ENCODE measurements at regions of chr6 and their contacts with region 1.

Region 1: DNA sequence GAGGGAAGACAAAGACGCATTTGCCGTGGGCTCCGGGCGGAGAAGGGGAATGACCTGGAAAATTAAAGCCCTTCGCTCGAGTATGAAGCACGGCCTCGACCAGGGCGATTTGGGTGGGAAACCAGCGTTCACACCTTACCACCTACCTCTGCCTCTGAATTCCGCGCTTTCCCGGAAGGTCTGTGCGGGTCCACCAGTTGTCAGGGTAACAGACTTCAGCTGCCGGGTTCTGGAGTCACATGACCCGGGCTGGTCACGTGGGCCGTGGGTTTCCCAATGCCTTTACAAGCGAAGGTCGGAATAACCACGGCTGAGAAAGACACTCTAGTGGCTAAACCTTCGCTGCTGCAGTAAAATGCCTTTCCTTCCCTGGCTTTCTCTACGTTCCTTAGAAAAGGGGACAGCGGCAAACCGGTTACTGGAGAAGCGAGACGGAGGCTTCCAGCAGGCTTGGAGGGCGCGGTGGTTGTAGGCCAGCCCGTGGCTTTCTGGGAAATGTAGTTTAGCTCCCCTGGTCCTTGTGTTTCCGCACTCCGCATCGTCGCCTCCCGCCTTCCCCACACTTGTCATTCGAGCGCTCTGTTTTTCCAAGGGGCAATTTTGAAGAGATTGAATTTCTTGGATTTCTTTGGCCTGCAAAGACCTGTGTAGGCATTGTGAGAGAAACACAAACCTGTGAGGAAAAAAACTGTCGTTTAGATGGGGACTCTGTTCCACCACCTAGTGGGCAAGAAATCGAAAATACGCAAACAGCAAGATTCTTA is at the start of gene CEP162:
- DNase-seq: peak; percentile 89 to 94 (median 91)
- H3K4me3 ChIP-seq: peak within 1 kb of the TSS; percentile 94 to 95
- H3K4me3 Mint-ChIP-seq: peak within 1 kb of the TSS; percentile 96 to 100 (median 98)
- H3K27ac ChIP-seq: peak within 1 kb of the TSS; percentile 69
- H3K27ac Mint-ChIP-seq: peak within 1 kb of the TSS; percentile 90 to 98 (median 96)
- H3K4me1 ChIP-seq: peaks cover 17% of the 10 kb centered on the region
- H3K4me1 Mint-ChIP-seq: peaks cover 8 to 32% (median 19%) of the 10 kb centered on the region in 4 donors
- H3K27me3 ChIP-seq: no peaks in the 10 kb centered on the region
- H3K27me3 Mint-ChIP-seq: peaks cover 5 to 6% of the 10 kb centered on the region in 2 donors
- total RNA-seq, gene CEP162: 10.3 to 10.4 TPM

Region 2: DNA sequence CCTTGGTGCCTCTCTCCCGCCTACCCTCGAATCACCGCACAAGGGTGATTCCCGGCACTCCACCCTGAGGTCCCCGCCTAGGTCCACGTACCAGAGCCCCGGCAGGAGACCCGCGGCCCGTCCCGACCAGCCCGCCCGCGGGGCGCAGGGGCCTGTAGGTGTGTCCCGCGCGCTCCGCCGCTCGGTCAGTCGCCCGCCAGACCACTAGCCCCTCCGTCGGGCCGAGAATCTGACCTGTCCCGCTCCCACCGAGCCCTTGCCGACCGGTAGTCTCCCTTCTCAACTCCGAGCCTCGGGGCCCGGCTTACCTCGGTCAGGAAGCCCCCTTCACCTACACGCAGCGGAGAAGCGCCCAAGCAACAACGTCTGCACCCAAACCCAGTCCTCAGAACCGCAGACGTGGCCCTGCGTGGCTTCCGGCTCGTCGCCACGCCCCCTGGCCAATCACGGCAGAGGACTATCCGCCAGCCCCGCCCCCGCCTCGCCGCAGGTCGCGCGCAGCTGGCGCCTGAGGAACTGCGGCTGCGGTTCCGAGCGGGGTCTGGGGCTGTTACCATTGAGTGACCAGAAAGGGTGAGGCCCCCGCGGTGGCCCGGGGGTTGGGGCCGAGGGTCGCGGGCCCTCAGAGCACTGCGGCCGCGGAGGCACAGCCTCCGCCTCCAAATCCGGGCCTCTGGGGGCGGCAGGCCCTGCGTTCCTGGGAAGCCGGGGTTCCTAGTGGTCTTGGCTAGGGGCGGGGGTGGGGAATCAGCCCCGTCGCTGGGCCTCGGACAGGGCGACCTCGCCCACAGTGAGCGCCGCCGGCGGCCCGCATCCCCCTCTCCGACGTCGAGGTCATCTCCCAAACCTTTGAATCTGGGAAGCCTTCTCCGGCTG is 1034.5 kb before region 1 on chr6 and contains the starts of genes PGM3 and RWDD2A:
- CTCF ChIA-PET with region 1: no interaction called
- POLR2A ChIA-PET with region 1: no interaction called
- intact Hi-C with region 1: loop called (anchors 2 kb)
- DNase-seq: peak; percentile 87 to 90 (median 90)
- H3K4me3 ChIP-seq: peak within 1 kb of the TSS; percentile 65 to 71
- H3K4me3 Mint-ChIP-seq: peak within 1 kb of the TSS; percentile 96 to 99 (median 98)
- H3K27ac ChIP-seq: peak within 1 kb of the TSS; percentile 88
- H3K27ac Mint-ChIP-seq: peak within 1 kb of the TSS; percentile 87 to 99 (median 98)
- H3K4me1 ChIP-seq: peaks cover 21% of the 10 kb centered on the region
- H3K4me1 Mint-ChIP-seq: peaks cover 32 to 66% (median 49%) of the 10 kb centered on the region in 4 donors
- H3K27me3 ChIP-seq: no peaks in the 10 kb centered on the region
- H3K27me3 Mint-ChIP-seq: no peaks in the 10 kb centered on the region
- total RNA-seq, gene PGM3: 35.9 to 39.9 TPM
- total RNA-seq, gene RWDD2A: 5.0 to 5.2 TPM

Region 3: DNA sequence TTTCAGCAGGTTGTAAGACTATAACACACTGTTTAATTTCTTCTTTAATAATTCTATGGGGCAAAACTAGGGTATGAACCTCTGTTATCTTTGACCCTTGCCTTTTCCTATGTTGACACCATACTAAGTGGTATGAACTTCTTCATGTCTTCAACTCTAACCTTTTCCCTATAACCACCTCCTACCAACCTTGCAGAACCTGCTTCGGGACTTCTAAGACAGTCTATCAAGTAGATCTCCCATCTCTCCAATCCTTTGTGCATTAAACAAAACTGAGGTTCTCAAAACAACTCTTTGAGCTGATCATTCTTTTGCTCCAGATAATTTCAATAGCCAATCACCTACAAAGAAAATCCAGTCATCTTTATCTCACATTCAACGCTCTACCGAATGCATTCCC is 542.1 kb before region 1 on chr6:
- CTCF ChIA-PET with region 1: no interaction called
- POLR2A ChIA-PET with region 1: no interaction called
- intact Hi-C with region 1: no loop called
- DNase-seq: no peak
- H3K4me3 ChIP-seq: no peak overlapping the region
- H3K4me3 Mint-ChIP-seq: no peak overlapping the region
- H3K27ac ChIP-seq: no peak overlapping the region
- H3K27ac Mint-ChIP-seq: no peak overlapping the region
- H3K4me1 ChIP-seq: no peaks in the 10 kb centered on the region
- H3K4me1 Mint-ChIP-seq: no peaks in the 10 kb centered on the region
- H3K27me3 ChIP-seq: no peaks in the 10 kb centered on the region
- H3K27me3 Mint-ChIP-seq: no peaks in the 10 kb centered on the region

Region 4: DNA sequence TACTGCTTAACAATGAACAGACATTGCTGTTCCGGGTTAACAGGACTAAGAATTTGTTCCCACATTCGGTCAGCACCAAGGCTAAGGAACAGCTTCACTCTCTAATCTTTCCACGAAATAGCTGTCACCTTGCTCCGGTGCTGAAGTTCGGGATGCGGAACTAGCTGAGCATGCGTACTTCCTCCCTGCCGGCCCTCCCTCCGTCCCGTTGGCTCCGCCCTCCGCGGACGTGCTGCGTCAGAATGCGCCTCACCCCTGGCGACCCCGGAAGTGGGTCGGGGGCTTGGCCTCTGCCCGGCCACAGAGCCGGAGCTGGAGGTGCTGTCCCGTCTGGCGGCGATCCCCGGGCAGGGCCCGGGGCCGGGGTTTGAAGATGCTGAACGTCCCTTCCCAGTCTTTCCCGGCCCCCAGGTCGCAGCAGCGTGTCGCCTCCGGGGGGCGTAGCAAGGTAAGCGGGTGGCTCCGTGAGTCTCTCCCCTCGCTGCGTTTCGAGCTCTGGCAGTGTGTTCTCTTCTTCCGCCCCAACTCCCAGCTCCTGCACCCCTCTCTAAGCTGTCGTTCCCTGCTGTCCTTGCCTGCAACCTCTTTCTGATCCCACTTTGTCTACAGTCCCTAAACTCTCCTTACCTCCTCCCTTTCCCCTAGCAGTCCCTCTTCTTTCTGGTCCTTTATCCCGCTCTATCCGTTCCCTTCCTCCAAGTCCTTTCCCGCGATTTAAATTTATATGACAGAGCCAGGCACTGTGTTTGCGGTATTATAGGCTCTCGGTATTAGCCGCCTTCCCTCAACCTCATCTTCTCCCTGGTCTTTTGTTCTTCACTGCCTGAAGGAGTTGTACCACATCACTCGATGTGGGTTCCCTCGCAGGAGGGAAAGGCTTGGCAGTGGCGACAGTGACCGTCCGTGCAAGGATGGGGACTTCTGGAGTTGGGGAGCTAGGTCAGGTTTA is 367.9 kb before region 1 on chr6 and contains the start of gene CYB5R4:
- CTCF ChIA-PET with region 1: interaction called, 31 read pairs
- POLR2A ChIA-PET with region 1: interaction called, 24 read pairs
- intact Hi-C with region 1: loop called (anchors 1 kb)
- DNase-seq: peak; percentile 94 to 95 (median 94)
- H3K4me3 ChIP-seq: peak within 1 kb of the TSS; percentile 87 to 95
- H3K4me3 Mint-ChIP-seq: peak within 1 kb of the TSS; percentile 94 to 99 (median 98)
- H3K27ac ChIP-seq: peak within 1 kb of the TSS; percentile 79
- H3K27ac Mint-ChIP-seq: peak within 1 kb of the TSS; percentile 87 to 97 (median 95)
- H3K4me1 ChIP-seq: peaks cover 22% of the 10 kb centered on the region
- H3K4me1 Mint-ChIP-seq: peaks cover 29 to 46% (median 37%) of the 10 kb centered on the region in 4 donors
- H3K27me3 ChIP-seq: no peaks in the 10 kb centered on the region
- H3K27me3 Mint-ChIP-seq: peaks cover 9% of the 10 kb centered on the region in 2 donors
- total RNA-seq, gene CYB5R4: 24.0 to 26.2 TPM

Region 5: DNA sequence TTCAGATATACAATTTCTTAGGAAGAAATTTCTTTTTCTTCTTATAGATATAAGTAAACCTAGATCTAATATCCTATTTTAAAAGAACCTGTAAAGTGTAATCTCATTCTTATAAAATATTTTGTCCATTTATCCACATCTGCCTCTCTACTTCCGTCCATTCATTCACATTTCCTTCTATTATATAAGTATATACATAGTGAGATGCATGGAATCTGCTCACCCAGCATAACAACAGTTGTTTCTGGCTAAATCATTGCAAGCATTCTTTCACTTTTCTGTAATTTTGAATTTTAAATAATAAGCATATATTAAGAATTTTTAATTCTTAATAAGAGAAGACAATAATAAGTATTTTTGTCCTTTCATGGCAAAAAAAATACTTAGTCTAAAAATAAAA is 45.6 kb before region 1 on chr6:
- CTCF ChIA-PET with region 1: no interaction called
- POLR2A ChIA-PET with region 1: no interaction called
- intact Hi-C with region 1: no loop called
- DNase-seq: no peak
- H3K4me3 ChIP-seq: no peak overlapping the region
- H3K4me3 Mint-ChIP-seq: no peak overlapping the region
- H3K27ac ChIP-seq: no peak overlapping the region
- H3K27ac Mint-ChIP-seq: no peak overlapping the region
- H3K4me1 ChIP-seq: no peaks in the 10 kb centered on the region
- H3K4me1 Mint-ChIP-seq: peaks cover 0 to 2% (median 0%) of the 10 kb centered on the region in 4 donors
- H3K27me3 ChIP-seq: no peaks in the 10 kb centered on the region
- H3K27me3 Mint-ChIP-seq: no peaks in the 10 kb centered on the region

Region 6: DNA sequence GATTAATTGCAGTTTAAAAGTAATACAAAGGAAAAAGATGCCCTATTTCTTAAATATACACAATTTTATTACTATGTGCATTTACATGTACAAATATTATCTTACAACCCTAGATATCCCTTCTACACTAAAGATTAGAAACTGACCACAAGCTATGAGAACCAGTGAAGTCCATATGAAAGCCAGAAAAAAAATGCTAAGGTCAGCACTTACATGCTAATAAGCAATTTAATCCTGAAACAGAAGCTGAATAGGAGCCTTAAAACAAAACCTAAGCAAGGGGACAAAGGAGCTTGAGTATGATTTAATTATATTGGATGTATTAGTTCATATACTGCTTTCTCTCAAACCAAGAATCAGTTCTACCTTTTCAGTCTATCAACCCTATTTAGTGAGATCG is 14.4 kb before region 1 on chr6:
- CTCF ChIA-PET with region 1: interaction called, 16 read pairs
- POLR2A ChIA-PET with region 1: no interaction called
- intact Hi-C with region 1: no loop called
- DNase-seq: no peak
- H3K4me3 ChIP-seq: no peak overlapping the region
- H3K4me3 Mint-ChIP-seq: no peak overlapping the region
- H3K27ac ChIP-seq: no peak overlapping the region
- H3K27ac Mint-ChIP-seq: no peak overlapping the region
- H3K4me1 ChIP-seq: no peaks in the 10 kb centered on the region
- H3K4me1 Mint-ChIP-seq: no peaks in the 10 kb centered on the region
- H3K27me3 ChIP-seq: no peaks in the 10 kb centered on the region
- H3K27me3 Mint-ChIP-seq: no peaks in the 10 kb centered on the region